Dorsolateral prefrontal cortex (tissue), 120 donors: ENCODE measurements at regions of chr19 and their contacts with region 1.

Region 1: DNA sequence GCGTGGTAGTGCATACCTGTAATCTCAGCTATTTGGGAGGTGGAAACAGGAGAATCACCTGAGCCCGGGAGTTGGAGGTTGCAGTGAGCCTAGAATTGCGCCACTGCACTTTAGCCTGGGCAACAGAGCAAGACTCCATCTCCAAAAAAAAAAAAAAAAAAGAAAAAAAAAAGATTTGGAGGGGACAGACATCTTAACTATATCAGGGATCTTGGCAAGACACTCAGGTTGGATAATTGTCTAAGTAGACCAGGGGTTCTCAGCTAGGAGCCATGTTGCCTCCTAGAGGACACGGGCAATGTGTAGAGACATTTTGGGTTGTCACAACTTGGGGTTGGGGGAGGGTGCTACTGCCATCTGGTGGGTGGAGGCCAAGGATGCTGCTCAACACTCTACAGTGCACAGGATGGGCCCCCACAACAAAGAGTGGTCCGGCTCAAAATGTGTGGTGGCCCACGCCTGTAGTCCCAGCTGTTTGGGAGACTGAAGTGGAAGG is 1.9 kb upstream of the ZNF580 start:
- DNase-seq: no peak
- H3K4me3 ChIP-seq: peak overlapping the region in 5 of 59 donors; percentile 6 to 84 (median 21)
- H3K27ac ChIP-seq: peak overlapping the region in 1 of 59 donors; percentile 9
- H3K27me3 ChIP-seq: no peaks in the 10 kb centered on the region
- CTCF ChIP-seq: peak in 38 of 56 donors; percentile 15 to 50 (median 36)

Region 2: GRCh38 chr19:55503502-55504251 is 135.2 kb before region 1 on chr19:
- intact Hi-C with region 1: no loop called
- DNase-seq: peak; percentile 91 to 97 (median 95)
- H3K4me3 ChIP-seq: peak overlapping the region; percentile 35 to 88 (median 61)
- H3K27ac ChIP-seq: peak overlapping the region in 50 of 59 donors; percentile 17 to 91 (median 80)
- H3K27me3 ChIP-seq: no peaks in the 10 kb centered on the region
- CTCF ChIP-seq: peak; percentile 95 to 100 (median 99)

Region 3: GRCh38 chr19:55586976-55587668 is 51.8 kb before region 1 on chr19:
- intact Hi-C with region 1: loop called in 1 of 2 experiments (anchors 5 kb)
- DNase-seq: peak; percentile 85 to 96 (median 92)
- H3K4me3 ChIP-seq: peak overlapping the region; percentile 20 to 69 (median 53)
- H3K27ac ChIP-seq: peak overlapping the region in 46 of 59 donors; percentile 5 to 88 (median 72)
- H3K27me3 ChIP-seq: no peaks in the 10 kb centered on the region
- CTCF ChIP-seq: peak in 4 of 56 donors; percentile 9 to 24 (median 10)

Region 4: GRCh38 chr19:55605207-55605636 is 33.7 kb before region 1 on chr19:
- intact Hi-C with region 1: no loop called
- DNase-seq: peak; percentile 91 to 98 (median 95)
- H3K4me3 ChIP-seq: peak overlapping the region; percentile 60 to 90 (median 80)
- H3K27ac ChIP-seq: peak overlapping the region; percentile 76 to 99 (median 95)
- H3K27me3 ChIP-seq: no peaks in the 10 kb centered on the region
- CTCF ChIP-seq: peak in 8 of 56 donors; percentile 10 to 34 (median 25)